Heart left ventricle (tissue), 16 donors: ENCODE measurements at regions of chr6 and their contacts with region 1.

Region 1: DNA sequence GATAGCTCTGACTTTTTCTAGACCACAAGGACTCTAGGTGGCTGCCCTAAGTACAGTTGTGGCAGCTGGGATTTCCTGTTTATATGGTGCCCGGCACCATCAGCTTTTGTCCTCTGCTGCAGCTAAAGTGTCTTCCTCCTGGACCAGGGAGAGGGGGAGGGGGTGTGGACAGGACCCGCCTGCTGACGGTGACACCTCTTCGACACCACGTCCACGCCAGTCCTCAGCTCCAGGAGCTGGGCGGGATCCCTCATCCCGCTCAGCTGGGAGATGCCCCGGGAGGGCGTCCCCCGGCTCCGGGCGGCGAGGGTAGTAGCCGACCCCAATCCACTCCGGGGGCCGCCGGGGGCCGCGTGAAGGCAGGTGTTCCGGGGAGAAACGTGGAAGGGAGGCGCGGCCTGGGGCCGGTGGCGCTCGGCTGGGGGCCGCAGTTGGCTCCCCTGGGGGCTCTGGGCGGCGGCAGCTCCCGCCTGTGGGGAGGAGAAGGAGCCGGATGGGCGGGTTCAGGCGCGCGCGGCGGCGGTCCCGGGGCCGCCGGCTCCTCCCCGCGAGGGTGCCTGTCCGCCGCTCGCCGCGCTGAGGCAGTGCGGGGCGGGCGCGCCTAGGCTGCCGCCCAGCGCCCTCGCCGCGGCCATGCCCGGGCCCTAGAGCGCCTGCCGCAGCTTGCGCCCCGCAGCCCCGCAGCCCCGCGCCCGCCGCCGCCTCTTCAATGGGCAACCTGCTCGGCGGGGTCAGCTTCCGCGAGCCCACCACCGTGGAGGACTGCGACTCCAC is at the start of gene OGFRL1:
- DNase-seq: peak; percentile 82 to 91 (median 85)
- ATAC-seq: peak; percentile 67 to 98 (median 96)
- H3K4me3 ChIP-seq: peak within 1 kb of the TSS; percentile 55 to 91 (median 76)
- H3K27ac ChIP-seq: peak within 1 kb of the TSS; percentile 85 to 98 (median 94)
- H3K4me1 ChIP-seq: peaks cover 0 to 65% (median 25%) of the 10 kb centered on the region in 12 donors
- H3K27me3 ChIP-seq: no peaks in the 10 kb centered on the region
- CTCF ChIP-seq: peak in 8 of 12 donors; percentile 8 to 47 (median 28)
- POLR2A ChIP-seq: peak in 1 of 2 donors; percentile 66
- total RNA-seq, gene OGFRL1: 6.5 to 18.5 (median 7.8) TPM

Region 2: DNA sequence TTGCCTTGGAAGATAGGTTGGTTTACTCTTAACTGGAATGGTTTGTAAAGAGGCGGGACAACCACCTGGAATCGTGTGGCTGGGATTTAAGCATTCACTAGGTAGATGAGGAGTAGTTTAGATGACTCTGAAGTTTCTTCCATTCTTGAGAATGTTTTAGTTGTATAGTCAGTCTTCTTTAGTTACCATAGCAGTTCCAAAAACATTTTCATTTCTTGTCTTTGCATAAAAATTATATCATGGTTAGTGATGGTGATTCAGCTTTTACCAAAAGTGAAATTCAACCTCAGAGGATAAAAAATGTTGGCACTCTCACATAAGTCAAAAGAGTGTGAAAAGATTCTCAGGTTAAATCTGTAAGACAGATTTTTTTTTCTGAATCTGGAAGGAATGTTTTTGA is 550.4 kb before region 1 on chr6:
- intact Hi-C with region 1: no loop called
- DNase-seq: no peak
- ATAC-seq: no peak
- H3K4me3 ChIP-seq: no peak overlapping the region
- H3K27ac ChIP-seq: no peak overlapping the region
- H3K4me1 ChIP-seq: peaks cover 0 to 13% (median 0%) of the 10 kb centered on the region in 12 donors
- H3K27me3 ChIP-seq: no peaks in the 10 kb centered on the region
- CTCF ChIP-seq: no peak
- POLR2A ChIP-seq: no peak

Region 3: DNA sequence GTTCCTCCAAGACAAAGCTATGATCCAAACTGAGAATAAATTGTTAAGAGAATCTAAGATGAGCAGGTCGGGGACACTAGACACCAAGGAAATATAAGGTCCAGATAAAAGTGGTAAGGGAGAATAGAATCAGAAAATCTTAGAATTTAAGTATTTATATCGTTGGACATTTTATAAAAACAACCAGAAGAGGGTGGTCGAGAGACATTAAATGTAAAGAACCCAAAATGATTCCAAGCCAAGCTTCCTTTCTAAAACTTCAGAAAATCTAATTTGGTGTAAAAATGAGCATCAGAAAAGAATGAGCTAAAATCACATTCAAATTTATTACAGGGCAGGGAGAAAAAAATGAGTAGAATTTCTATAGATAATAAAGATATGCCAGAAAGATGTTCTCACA is 97.6 kb before region 1 on chr6:
- intact Hi-C with region 1: loop called in 1 of 10 experiments (anchors 10 kb)
- DNase-seq: no peak
- ATAC-seq: no peak
- H3K4me3 ChIP-seq: no peak overlapping the region
- H3K27ac ChIP-seq: no peak overlapping the region
- H3K4me1 ChIP-seq: peaks cover 0 to 6% (median 0%) of the 10 kb centered on the region in 12 donors
- H3K27me3 ChIP-seq: no peaks in the 10 kb centered on the region
- CTCF ChIP-seq: peak in 11 of 12 donors; percentile 35 to 58 (median 43)
- POLR2A ChIP-seq: no peak

Region 4: DNA sequence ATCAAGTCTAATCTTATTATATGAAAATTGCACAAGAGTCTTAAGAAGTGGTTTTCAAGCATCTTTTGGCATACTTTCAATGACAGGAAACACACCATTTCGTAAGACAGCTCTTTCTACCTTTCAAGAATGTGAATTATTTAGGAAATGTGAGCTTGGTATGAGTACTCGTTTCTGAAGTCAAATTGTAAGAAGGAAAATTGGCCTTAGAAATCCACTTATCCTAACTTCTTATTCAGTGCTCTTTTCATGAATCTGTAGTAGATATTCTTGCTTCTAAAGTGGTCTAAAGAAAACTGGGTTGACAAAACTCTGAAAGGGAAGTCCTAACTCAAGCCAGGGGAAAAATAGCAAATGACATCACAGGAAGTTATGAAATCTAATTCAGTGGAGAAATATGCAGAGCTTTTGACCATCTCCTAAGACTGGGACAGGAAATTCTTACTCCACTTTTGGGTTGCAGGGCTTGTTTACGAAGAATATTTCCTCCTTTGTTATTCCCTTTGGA is 38.3 kb before region 1 on chr6:
- intact Hi-C with region 1: loop called in 3 of 10 experiments (anchors 1 to 2 kb)
- DNase-seq: peak in 1 of 5 donors; percentile 17
- ATAC-seq: peak; percentile 75 to 91 (median 88)
- H3K4me3 ChIP-seq: no peak overlapping the region
- H3K27ac ChIP-seq: peak overlapping the region; percentile 31 to 91 (median 70)
- H3K4me1 ChIP-seq: peaks cover 0 to 70% (median 22%) of the 10 kb centered on the region in 12 donors
- H3K27me3 ChIP-seq: no peaks in the 10 kb centered on the region
- CTCF ChIP-seq: no peak
- POLR2A ChIP-seq: no peak

Region 5: DNA sequence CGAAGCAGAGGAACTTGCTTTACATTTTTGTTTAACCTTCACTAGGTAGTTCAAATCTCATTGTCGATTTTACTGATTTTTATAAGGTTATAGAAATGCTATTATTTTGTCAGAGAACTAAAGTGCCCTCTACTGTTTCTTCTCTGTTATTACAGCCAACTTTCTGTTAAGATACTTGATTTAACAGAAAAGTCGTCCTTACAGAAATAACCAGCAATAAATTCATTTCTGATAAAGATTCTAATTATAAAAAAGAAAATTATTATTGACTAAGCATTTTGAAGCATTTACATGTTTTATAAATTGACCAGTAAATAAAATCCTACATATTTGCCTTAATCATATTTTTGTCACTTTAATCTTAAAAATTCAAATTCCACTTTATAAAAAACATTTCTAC is 61.0 kb after region 1 on chr6:
- intact Hi-C with region 1: loop called in 6 of 10 experiments (anchors 5 to 10 kb)
- DNase-seq: no peak
- ATAC-seq: peak in 1 of 4 donors; percentile 43
- H3K4me3 ChIP-seq: no peak overlapping the region
- H3K27ac ChIP-seq: peak overlapping the region in 9 of 12 donors; percentile 43 to 75 (median 57)
- H3K4me1 ChIP-seq: peaks cover 0 to 34% (median 18%) of the 10 kb centered on the region in 12 donors
- H3K27me3 ChIP-seq: no peaks in the 10 kb centered on the region
- CTCF ChIP-seq: peak; percentile 57 to 89 (median 75)
- POLR2A ChIP-seq: no peak

Region 6: GRCh38 chr6:71420693-71421328 is 132.4 kb after region 1 on chr6:
- intact Hi-C with region 1: loop called in 2 of 10 experiments (anchors 5 to 10 kb)
- DNase-seq: peak; percentile 95 to 98 (median 98)
- ATAC-seq: peak; percentile 98 to 99 (median 99)
- H3K4me3 ChIP-seq: peak overlapping the region; percentile 74 to 94 (median 88)
- H3K27ac ChIP-seq: peak overlapping the region; percentile 89 to 99 (median 97)
- H3K4me1 ChIP-seq: peaks cover 4 to 28% (median 19%) of the 10 kb centered on the region in 12 donors
- H3K27me3 ChIP-seq: peaks cover 0 to 20% (median 0%) of the 10 kb centered on the region in 9 donors
- CTCF ChIP-seq: peak in 1 of 12 donors; percentile 11
- POLR2A ChIP-seq: peak; percentile 87 to 99

Region 7: GRCh38 chr6:71489747-71490315 is 201.4 kb after region 1 on chr6:
- intact Hi-C with region 1: loop called in 1 of 10 experiments (anchors 10 kb)
- DNase-seq: no peak
- ATAC-seq: no peak
- H3K4me3 ChIP-seq: no peak overlapping the region
- H3K27ac ChIP-seq: no peak overlapping the region
- H3K4me1 ChIP-seq: no peaks in the 10 kb centered on the region
- H3K27me3 ChIP-seq: no peaks in the 10 kb centered on the region
- CTCF ChIP-seq: no peak
- POLR2A ChIP-seq: no peak